Posterior vena cava (tissue), 2 donors: ENCODE measurements at regions of chr17 and their contacts with region 1.

Region 1: DNA sequence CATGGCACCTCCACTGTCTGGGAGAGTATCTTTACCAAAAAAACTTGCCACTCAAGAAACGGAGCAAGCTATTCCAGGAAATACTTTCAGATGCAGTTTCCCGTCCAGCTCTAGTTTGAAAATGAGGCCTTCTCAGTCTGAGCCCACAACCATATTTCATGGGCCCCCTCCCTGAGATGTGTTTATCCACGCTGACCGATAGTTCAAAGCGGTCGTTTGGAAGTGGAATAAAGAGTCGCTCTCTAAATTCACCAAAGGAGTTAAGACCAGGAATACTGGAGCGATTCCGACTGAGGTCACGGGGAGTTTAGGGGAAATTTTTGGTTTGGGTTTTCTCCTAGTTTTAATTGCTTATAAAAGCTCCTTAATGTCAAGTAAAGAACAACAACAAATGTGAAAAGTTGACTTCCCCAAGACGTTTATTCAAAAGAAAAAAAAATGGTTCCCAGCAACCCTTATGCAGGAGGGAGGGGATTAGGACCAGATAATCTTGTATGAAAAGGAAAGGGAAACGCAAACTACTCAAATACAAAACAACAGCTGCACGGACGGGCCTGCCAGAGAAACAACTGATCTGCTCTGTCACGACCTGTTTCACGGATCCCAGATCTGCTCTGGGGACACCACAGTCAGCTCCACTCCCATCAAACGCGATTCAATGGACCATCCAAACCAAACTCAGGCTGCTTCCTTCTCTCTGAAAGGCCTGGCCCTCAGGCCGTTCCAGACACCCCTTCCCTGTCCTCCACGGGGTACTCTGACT is 77.1 kb downstream of the MRM3 start:
- DNase-seq: no peak

Region 2: DNA sequence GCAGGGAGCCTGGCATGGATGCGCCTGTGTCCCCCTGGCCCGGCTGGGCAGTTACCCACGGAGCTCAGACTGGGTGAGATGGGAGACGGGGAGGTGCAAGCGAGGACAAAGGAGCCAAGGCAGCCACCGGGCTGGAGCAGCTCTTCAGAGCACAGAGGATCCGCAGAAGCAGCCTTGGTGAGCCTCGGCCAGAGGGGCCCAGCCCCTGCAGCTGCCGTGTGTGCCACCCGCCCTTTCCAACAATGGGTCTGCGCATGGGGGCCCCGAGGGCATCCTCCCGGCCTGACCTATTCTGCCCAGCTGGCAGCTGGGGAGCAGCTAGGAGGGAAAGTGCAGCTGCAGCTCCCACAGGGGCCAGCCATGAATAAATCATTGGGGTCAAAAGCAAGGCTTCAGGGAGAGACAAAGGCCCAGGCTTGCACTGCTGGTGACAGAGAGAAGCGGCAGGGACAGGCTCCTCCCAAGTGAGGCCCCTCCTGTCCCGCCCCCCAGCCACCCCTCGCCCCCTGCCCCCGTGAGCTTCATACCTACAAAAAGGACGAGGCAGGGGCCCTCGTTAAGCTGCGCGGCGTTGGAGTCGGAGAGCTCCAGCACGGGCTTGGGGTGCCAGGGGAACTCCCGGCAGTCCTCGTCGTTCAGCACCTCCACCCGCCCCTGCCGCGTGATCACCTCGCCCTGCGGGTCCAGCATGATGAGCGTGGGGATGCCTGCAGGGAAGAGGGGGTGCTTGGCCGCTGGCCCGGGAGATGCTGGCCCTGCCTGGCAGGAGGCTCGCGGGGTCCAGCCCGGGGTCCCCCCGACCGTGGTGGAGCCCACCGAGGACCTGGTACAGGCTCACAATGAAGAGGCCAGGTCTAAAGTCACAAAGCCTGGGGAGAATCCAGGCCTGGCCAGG is 54.5 kb before region 1 on chr17:
- intact Hi-C with region 1: loop called in 1 of 2 experiments (anchors 2 kb)
- DNase-seq: no peak

Region 3: GRCh38 chr17:1170739-1171138 is 311.5 kb after region 1 on chr17:
- intact Hi-C with region 1: no loop called
- DNase-seq: no peak